Activated naive CD4-positive, alpha-beta T cell treated with anti-CD3 and anti-CD28 coated beads for 36 hours (primary cell): ENCODE measurements at regions of chr11 and their contacts with region 1.

Region 1: DNA sequence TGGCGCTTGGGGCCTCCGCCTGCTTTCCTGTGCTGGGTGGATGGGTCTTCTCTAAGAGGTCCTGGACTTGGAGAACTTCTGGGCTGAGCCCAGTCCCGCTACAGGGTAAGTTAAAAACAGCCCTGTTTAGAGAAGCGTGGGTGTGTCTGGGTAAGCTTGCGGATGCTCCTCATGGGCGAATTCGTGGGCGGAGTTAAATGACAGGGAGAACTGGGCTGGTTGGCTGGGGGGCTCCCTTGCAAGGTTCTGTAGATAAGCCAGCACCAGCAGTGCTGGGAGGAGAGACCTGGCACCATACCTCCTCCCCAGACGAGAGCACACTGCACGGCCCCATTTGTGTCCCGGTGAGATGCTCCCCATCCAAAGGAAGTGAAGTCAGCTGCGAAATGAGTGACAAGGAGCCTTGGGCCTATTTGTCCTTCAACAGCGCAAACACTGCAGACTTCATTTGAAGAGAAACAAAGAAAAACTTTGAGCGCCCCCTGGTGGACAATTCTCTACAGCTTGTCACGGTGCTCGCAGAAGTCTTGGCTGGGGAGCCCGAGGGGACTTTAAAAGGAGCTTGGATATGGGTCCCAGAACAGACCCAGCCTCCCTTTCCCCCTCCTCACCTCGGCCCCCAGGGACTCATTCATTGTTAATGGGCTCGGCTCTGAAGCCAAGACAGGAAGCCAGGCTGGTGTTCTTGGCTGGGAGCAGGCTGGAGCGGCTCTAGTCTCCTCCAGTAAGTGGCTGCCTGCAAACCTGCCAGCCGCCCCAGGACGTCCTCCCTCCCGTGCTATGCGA is 39.5 kb downstream of the TP53I11 start:
- DNase-seq: peak; percentile 96
- H3K4me3 Mint-ChIP-seq: no peak overlapping the region
- H3K27ac Mint-ChIP-seq: no peak overlapping the region
- H3K4me1 Mint-ChIP-seq: peaks cover 3% of the 10 kb centered on the region
- H3K27me3 Mint-ChIP-seq: no peaks in the 10 kb centered on the region

Region 2: GRCh38 chr11:44286268-44286880 is 624.8 kb before region 1 on chr11:
- CTCF ChIA-PET with region 1: no interaction called
- intact Hi-C with region 1: loop called (anchors 1 kb)
- DNase-seq: peak; percentile 77
- H3K4me3 Mint-ChIP-seq: no peak overlapping the region
- H3K27ac Mint-ChIP-seq: no peak overlapping the region
- H3K4me1 Mint-ChIP-seq: no peaks in the 10 kb centered on the region
- H3K27me3 Mint-ChIP-seq: no peaks in the 10 kb centered on the region

Region 3: DNA sequence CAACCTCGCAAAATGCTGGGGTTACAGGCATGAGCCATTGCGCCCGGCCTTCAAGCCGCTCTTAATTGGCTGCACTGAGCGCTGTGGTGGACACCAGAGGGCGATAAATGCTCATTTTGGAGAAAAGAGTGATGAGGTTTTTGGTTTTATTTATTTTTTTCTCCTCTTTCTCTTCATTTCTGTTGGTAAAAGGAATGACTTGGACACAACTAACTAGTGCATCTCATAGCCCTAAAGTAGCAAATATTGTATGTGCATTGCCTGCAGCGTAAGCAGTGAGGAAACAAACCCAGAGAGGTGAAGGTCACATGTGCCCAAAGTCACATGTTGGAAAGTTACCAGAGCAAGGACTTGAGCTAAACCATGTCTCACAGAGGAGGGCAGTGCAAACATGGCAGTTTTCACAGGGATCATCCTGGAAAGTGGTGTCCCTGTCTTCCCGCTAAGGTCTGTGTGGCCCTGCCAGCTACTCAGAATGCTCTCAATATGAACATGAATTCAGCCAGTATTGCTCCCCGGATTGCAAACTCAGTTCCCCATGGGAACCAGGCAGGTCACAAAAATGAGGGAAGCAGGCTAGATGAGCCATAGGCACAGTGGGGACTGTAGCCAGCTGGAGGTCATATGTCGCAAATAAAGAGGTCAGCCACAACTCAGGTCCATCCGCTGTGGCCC is 354.4 kb before region 1 on chr11:
- CTCF ChIA-PET with region 1: interaction called, 21 read pairs
- intact Hi-C with region 1: loop called (anchors 1 kb)
- DNase-seq: peak; percentile 85
- H3K4me3 Mint-ChIP-seq: no peak overlapping the region
- H3K27ac Mint-ChIP-seq: peak overlapping the region; percentile 83
- H3K4me1 Mint-ChIP-seq: peaks cover 25% of the 10 kb centered on the region
- H3K27me3 Mint-ChIP-seq: no peaks in the 10 kb centered on the region

Region 4: DNA sequence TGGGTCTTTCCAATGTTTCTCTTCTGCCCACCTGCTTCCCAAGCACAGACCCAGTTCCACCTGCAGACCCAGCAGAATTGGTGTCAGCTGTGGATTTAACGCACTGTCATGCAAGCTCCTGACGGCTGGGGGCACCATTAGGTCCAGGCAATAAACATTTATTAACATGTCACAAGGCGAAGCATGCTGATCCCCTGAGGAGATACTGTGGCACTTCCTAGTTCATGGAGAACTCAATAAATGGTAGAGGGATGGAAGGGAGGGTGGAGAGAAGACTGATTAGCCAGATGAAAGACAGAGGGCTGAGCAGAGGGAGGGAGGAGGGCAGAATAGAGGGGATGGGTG is 252.7 kb before region 1 on chr11:
- CTCF ChIA-PET with region 1: interaction called, 9 read pairs
- intact Hi-C with region 1: loop called (anchors 2 kb)
- DNase-seq: peak; percentile 65
- H3K4me3 Mint-ChIP-seq: no peak overlapping the region
- H3K27ac Mint-ChIP-seq: no peak overlapping the region
- H3K4me1 Mint-ChIP-seq: peaks cover 17% of the 10 kb centered on the region
- H3K27me3 Mint-ChIP-seq: no peaks in the 10 kb centered on the region

Region 5: DNA sequence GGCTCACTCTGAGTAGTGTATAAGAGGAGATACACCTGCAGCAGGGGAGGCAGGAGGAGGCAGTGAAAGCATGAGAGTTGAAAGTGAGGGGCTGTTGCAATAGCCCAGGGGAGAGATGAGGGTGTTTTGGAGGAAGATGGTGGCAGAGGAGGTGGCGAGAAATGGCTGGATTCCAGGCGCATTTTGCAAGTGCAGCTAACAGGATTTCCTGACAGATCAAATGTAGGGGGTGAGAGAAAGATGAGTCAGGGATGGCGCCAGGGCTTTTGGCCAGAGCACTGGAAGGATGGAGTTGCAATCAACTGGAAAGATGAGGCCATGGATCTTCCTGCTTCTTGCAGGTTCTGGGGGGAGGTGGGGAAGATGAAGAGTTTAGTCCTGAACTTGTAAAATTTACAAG is 201.3 kb before region 1 on chr11:
- CTCF ChIA-PET with region 1: no interaction called
- intact Hi-C with region 1: no loop called
- DNase-seq: no peak
- H3K4me3 Mint-ChIP-seq: no peak overlapping the region
- H3K27ac Mint-ChIP-seq: no peak overlapping the region
- H3K4me1 Mint-ChIP-seq: peaks cover 26% of the 10 kb centered on the region
- H3K27me3 Mint-ChIP-seq: no peaks in the 10 kb centered on the region

Region 6: DNA sequence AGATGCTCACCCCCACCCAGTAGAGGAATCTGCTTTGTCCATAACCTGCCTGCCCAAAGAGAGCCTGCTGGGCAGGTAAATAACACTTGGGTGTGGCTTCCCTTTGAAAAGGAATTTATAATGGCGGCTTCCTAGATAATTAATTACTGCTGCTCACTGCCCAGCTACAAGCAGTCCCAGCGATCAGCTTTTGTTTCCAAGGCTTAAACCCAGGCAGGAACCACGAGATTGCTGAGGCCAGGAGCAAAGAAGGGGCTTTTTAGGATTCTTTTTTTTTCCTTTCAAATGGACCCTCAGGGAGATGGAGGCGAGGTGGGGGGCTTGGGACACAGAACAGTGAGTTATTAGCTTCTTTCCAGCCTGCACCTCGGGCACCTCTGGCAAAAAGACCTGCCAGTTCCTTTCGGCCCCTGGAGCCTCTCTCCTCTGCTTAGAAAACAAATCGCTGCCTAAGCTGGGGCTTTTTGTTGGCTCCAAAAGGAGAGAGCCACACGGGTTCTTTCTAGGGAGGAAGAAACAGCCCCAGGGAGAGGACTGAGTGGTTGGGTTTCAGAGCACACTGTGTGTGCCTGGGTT is 77.3 kb before region 1 on chr11:
- CTCF ChIA-PET with region 1: interaction called, 11 read pairs
- intact Hi-C with region 1: no loop called
- DNase-seq: no peak
- H3K4me3 Mint-ChIP-seq: no peak overlapping the region
- H3K27ac Mint-ChIP-seq: no peak overlapping the region
- H3K4me1 Mint-ChIP-seq: no peaks in the 10 kb centered on the region
- H3K27me3 Mint-ChIP-seq: no peaks in the 10 kb centered on the region

Region 7: DNA sequence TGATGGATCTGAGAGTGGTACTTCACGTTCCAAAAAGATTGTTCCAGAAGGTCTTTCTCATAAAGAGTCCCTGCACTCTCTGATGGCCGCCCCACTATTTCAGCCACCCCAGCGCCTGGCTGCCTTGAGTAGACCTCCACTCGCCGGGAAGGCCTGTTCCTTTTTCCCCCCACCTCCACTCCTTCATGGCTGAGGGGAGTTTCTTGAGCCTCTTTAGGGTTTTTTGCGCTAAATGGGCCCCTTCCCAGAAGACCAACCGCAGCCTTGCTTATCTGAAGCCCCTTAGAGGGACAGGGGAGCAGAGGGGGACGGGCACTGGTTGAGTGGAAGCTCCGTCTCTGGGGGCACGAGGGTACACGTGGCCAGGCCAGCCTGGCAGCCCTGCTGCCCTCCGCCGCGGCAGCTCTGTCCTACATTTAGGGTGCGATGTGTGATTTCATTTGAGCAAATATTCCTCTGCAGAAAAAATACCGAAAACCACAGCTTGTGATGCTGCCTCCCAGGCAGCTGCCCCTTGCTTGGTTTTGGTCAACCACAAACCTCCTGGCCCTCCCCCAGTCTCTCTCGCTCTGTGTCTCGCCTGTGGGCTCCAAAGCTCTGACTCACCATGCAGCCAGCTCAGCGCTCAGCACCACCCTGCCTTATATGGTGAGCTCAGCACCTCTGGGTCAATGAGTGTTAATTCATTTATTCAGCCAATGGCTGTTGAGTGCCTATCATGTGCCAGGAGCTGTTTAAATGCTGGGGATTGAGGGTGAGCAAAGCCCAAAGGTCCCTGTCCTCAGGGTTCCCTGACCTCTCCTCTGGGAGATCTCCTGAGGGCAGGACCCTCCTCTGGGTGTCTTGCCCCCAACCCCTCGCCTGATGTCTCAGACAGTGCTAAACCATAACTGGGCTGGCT is 49.1 kb before region 1 on chr11:
- CTCF ChIA-PET with region 1: no interaction called
- intact Hi-C with region 1: no loop called
- DNase-seq: peak; percentile 91
- H3K4me3 Mint-ChIP-seq: no peak overlapping the region
- H3K27ac Mint-ChIP-seq: no peak overlapping the region
- H3K4me1 Mint-ChIP-seq: peaks cover 32% of the 10 kb centered on the region
- H3K27me3 Mint-ChIP-seq: no peaks in the 10 kb centered on the region